Transverse colon (tissue), 4 donors: ENCODE measurements at regions of chr3 and their contacts with region 1.

Region 1: DNA sequence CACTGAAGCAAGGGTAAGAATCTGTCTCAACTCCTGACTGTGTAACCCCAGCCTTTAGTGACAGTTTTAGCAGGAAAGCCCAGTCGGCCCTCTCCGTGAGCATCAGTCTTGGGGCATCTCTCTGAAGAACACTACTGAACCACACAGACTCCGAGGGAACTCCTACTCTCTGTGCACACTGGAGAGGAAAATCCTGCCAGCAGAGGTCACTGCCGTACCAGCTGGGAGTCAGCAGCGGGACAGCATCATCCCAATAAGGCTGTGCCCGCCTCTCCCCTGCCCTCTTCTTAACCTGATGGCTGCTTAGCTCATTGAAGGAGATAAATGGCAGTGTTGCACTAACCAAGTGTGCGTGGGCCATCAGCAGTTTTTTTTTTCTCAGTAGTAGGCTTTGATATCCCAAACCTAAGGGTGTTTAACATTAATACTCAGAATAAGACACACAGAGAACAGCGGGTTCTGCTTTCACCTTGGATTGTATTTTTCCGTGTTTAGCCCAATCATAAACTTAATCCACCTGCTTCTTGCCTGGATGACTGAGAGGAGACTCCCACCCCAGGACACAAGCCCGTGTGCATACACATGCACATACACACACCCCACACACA is 26.6 kb upstream of the RASA2 start:
- DNase-seq: peak; percentile 90
- H3K4me3 ChIP-seq: no peak overlapping the region
- H3K27ac ChIP-seq: no peak overlapping the region
- H3K4me1 ChIP-seq: peaks cover 0 to 7% (median 6%) of the 10 kb centered on the region in 4 donors
- H3K27me3 ChIP-seq: no peaks in the 10 kb centered on the region
- CTCF ChIP-seq: peak; percentile 76 to 86 (median 82)
- EP300 ChIP-seq: no peak
- POLR2A ChIP-seq: no peak

Region 2: DNA sequence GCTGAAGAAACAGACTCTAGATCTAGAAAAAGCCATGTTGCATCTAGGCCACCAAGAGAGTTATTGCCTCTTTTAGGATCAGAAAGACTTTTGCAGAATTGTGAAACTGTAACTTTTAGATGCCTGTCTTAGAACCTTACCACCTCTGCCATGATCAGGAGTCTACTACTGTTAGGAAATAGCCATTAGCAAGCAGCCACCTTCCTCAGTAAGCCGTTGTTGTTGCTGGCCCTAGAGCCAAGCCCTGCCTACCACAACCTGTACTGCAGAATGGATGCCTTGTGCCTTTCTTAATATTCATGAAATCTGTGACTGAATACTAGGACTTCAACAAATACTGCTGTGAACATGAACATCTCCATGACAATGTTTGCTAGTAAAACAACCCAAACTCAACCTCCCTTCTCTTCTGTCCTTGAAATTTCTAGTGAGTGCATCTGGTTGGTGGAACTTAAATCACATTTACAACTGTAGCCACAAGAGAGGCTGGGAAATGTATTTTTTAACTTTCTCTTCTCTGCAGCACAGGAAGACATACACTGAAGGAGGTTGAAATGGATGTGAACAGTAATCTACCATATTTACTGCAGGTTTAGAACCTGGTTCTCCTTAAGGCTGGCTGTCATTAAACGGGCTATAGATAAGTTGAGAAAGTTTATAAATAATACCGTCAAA is 47.3 kb after region 1 on chr3:
- in situ Hi-C with region 1: no loop called
- intact Hi-C with region 1: no loop called
- DNase-seq: no peak
- H3K4me3 ChIP-seq: no peak overlapping the region
- H3K27ac ChIP-seq: no peak overlapping the region
- H3K4me1 ChIP-seq: no peaks in the 10 kb centered on the region
- H3K27me3 ChIP-seq: no peaks in the 10 kb centered on the region
- CTCF ChIP-seq: no peak
- EP300 ChIP-seq: no peak
- POLR2A ChIP-seq: no peak

Region 3: GRCh38 chr3:141553055-141553454 is 92.9 kb after region 1 on chr3:
- in situ Hi-C with region 1: loop called in 1 of 4 experiments (anchors 10 kb)
- intact Hi-C with region 1: no loop called
- DNase-seq: no peak
- H3K4me3 ChIP-seq: no peak overlapping the region
- H3K27ac ChIP-seq: no peak overlapping the region
- H3K4me1 ChIP-seq: peaks cover 5 to 9% (median 6%) of the 10 kb centered on the region in 4 donors
- H3K27me3 ChIP-seq: no peaks in the 10 kb centered on the region
- CTCF ChIP-seq: no peak
- EP300 ChIP-seq: no peak
- POLR2A ChIP-seq: no peak

Region 4: DNA sequence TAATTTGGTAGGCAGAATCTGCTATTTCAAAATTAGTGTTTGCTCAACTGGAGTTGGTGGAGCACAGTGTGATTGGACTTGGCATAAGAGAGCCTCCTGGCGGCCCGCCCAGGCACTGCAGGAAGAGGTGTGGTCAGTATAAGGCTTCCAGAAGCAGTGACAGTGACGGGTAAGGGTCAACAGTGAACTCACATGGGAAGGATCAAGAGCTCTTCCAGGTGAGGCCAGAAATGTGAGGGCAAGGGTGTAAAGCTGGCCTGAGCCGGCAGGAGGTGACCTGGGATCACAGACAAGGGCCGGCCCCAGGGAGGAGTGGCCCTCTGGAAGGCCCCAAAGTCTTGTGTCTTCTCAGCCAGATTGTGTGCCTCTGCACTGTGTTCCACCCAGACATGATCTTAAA is 184.7 kb after region 1 on chr3:
- in situ Hi-C with region 1: loop called in 1 of 4 experiments (anchors 10 kb)
- intact Hi-C with region 1: no loop called
- DNase-seq: peak; percentile 87
- H3K4me3 ChIP-seq: no peak overlapping the region
- H3K27ac ChIP-seq: no peak overlapping the region
- H3K4me1 ChIP-seq: peaks cover 0 to 22% (median 3%) of the 10 kb centered on the region in 4 donors
- H3K27me3 ChIP-seq: no peaks in the 10 kb centered on the region
- CTCF ChIP-seq: peak; percentile 63 to 76 (median 69)
- EP300 ChIP-seq: no peak
- POLR2A ChIP-seq: no peak